OCI-LY7 (cell line): ENCODE measurements at regions of chr2 and their contacts with region 1.

Region 1: DNA sequence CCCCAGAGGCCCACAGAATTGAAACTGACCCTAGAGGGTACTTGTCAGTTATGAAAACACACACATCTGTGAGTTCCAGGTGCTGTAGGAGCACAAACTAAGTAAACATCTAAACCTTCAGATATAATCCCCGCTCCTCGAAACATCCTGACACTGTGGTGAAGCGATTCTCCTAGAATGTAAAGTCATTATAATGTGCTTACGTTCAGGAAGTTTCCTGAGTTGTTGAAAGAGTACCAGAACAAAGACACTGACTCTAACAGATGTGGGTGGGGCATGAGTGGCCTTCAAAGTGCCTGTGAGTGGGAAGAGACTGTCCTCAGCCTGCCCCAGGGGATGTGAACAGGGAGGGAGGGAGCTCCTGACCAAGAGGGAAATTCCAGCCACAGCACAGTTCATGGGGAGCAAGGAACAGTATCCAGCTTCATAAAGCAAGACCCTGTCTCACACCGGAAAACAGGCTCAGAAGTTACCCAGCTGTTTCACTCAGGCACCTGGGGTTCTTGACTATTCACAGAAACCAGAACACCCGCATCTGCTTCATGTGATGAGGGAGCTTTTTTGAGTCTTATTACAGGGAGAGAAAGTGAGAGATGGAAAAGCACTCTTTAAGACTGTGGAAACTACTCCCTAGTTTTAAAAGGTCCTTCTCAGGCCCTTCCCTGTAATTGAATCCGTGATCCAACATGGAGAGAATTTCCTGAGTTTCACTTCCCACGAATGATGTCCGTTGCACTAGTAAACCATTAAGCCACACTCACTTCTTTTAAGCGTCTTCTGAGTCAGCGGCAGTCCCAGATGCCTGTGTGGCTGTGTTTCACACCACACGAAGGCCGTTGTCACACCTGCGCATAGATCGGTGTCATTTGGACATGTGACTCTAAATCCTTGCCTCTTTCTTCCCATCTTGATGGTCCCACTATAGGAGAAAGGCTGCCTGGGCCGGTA is 88.6 kb upstream of the EML6 start:
- DNase-seq: peak; percentile 92
- H3K4me3 ChIP-seq: peak overlapping the region; percentile 53
- H3K27ac ChIP-seq: peak overlapping the region; percentile 97
- H3K4me1 ChIP-seq: peaks cover 90% of the 10 kb centered on the region
- CTCF ChIP-seq: no peak

Region 2: DNA sequence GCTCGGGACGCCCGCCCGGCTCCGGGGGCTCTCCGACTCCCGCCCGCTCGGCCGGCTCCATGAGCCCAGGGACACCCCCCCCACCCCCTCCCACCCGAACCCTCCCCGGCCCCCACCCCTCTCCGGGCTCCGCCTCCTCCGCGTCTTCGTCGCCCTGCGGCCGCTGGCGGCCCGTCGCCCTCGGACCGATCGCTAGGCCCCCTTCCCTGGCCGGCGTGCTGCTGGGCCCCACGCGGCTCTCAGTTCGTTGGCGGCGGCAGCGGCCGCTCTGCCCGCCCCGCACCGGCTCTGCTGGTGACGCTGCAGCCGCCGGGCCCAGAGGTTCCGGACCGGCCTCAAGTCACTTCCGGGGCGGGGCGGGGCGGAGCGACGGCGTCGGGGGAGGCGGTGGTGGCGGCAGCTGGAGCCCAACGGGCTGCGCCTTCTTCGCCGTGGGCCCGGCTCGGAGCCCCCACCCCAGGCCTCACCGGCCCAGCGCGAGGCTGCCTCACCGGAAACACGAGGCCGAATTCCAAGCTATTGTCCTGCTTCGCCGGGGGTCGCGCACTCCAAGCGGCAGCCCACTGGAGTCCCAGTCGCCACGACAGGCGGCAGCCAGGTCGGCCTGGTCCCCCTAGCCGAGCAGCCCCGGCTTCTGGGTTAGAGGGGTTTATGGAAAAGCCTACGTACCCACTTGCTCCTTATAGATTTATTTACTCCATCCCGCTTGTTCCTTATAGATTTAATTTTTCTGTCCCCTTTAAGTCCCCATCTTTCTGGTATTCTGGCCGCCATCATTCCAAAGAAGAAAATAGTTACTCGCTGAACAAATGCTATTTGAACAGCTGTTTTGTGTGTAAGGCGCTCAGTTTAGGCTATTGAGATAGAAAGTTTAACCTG is 663.9 kb before region 1 on chr2 and contains the start of gene PSME4:
- CTCF ChIA-PET with region 1: no interaction called
- POLR2A ChIA-PET with region 1: no interaction called
- intact Hi-C with region 1: loop called (anchors 10 kb)
- DNase-seq: peak; percentile 91
- H3K4me3 ChIP-seq: peak within 1 kb of the TSS; percentile 96
- H3K27ac ChIP-seq: peak within 1 kb of the TSS; percentile 60
- H3K4me1 ChIP-seq: peaks cover 24% of the 10 kb centered on the region
- CTCF ChIP-seq: no peak
- total RNA-seq, gene PSME4: 38.0 and 38.8 TPM in 2 replicates

Region 3: GRCh38 chr2:54522624-54523281 is 112.1 kb before region 1 on chr2:
- CTCF ChIA-PET with region 1: interaction called, 3 read pairs
- POLR2A ChIA-PET with region 1: no interaction called
- intact Hi-C with region 1: loop called (anchors 2 kb)
- DNase-seq: peak; percentile 89
- H3K4me3 ChIP-seq: no peak overlapping the region
- H3K27ac ChIP-seq: no peak overlapping the region
- H3K4me1 ChIP-seq: peaks cover 15% of the 10 kb centered on the region
- CTCF ChIP-seq: peak; percentile 93

Region 4: GRCh38 chr2:54558188-54559005 is 76.4 kb before region 1 on chr2:
- CTCF ChIA-PET with region 1: interaction called, 7 read pairs
- POLR2A ChIA-PET with region 1: interaction called, 22 read pairs
- intact Hi-C with region 1: loop called (anchors 1 kb)
- DNase-seq: peak; percentile 89
- H3K4me3 ChIP-seq: peak overlapping the region; percentile 85
- H3K27ac ChIP-seq: peak overlapping the region; percentile 79
- H3K4me1 ChIP-seq: peaks cover 43% of the 10 kb centered on the region
- CTCF ChIP-seq: no peak

Region 5: DNA sequence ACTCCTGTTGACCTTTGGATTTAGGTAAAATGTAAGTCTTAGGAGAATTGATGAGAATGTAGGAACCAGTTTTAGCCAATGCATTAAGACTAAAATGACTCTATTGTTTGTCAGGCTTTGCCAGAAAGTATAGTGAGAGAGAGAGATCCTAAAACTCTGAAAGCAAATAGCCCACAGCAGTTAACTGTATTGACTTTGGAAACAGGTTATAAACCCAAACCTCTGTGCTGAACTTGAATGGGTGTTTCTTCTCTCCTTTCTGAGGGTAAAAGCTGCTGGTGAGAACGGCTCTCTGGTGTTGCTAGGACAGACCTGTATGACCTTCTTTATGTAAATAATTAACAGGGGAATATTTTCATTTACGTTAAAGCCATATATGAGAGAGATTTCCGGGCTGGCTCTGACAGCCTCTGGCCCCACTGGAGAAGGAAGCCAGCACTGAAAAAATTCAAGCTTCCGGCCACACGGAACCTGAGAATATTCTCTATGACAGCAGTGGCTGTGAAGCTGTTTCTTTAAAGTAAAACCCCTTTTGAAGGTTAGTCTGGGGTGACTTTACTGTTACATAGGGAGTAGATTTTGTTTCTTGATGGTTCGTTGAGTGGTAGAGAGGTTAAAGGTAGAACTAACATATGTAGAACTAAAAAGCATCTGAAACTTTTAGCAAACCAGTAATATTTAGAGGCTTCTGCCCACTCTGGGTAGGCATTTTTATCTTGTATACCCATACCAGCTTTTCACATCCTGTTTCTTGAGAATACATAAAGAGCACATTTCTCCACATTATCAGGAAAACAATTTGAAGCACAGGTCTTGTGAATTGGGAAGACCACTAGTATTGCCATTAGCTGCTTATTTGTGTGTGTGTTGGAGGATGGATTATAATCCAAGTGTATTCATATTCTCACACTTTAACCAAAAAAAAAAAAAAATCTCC is 54.9 kb before region 1 on chr2:
- CTCF ChIA-PET with region 1: no interaction called
- POLR2A ChIA-PET with region 1: interaction called, 9 read pairs
- intact Hi-C with region 1: loop called (anchors 1 kb)
- DNase-seq: peak; percentile 68
- H3K4me3 ChIP-seq: peak overlapping the region; percentile 62
- H3K27ac ChIP-seq: peak overlapping the region; percentile 83
- H3K4me1 ChIP-seq: peaks cover 95% of the 10 kb centered on the region
- CTCF ChIP-seq: no peak

Region 6: DNA sequence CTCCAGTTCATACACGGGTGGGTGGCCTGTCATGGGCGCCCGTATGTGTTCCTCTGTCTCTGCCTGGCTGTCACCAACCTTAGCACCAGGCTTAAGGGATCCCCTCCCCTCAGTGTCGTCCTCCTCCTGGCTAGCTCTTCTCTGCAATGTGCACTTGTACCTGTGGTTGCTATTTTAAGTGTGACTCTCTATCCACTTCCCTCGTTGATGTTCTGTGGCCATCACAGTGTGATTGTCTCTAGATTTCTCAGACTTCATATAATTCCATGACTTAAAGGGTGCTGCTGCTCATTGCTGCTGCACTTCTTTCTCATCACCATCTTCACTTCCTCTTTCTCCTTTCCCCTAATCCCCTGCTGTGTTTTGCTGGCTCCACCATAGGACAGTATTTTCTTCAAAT is 232.0 kb after region 1 on chr2:
- CTCF ChIA-PET with region 1: no interaction called
- POLR2A ChIA-PET with region 1: no interaction called
- intact Hi-C with region 1: no loop called
- DNase-seq: peak; percentile 48
- H3K4me3 ChIP-seq: no peak overlapping the region
- H3K27ac ChIP-seq: peak overlapping the region; percentile 41
- H3K4me1 ChIP-seq: peaks cover 16% of the 10 kb centered on the region
- CTCF ChIP-seq: no peak

Region 7: DNA sequence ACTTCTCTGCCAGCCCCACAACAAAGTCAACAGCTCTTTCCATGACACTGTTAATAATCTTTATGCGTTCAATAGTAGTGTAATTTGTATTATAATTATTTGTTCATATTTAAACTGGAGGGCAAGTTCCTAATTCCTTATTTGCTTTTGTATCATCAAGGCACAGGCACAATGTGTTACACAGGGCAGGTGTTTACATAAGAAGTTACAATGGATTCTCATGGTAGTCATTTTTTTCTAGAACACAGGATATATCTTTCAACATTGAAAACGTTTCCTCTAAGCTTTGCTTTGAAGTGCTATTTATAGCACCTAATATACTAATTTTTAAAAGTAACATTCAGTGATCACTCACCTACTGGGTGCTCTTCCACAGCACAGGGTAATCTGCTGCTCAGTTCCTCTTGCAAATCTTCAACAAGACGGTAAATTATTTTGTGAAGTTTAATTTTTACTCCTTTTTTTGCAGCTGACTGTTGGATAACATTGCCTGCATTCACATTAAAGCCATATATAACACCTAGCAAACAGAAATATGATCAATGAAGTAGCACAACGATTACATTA is 604.9 kb after region 1 on chr2:
- CTCF ChIA-PET with region 1: no interaction called
- POLR2A ChIA-PET with region 1: no interaction called
- intact Hi-C with region 1: no loop called
- DNase-seq: no peak
- H3K4me3 ChIP-seq: no peak overlapping the region
- H3K27ac ChIP-seq: no peak overlapping the region
- H3K4me1 ChIP-seq: peaks cover 11% of the 10 kb centered on the region
- CTCF ChIP-seq: no peak